HEK293 (cell line): ENCODE measurements at regions of chr20 and their contacts with region 1.

Region 1: DNA sequence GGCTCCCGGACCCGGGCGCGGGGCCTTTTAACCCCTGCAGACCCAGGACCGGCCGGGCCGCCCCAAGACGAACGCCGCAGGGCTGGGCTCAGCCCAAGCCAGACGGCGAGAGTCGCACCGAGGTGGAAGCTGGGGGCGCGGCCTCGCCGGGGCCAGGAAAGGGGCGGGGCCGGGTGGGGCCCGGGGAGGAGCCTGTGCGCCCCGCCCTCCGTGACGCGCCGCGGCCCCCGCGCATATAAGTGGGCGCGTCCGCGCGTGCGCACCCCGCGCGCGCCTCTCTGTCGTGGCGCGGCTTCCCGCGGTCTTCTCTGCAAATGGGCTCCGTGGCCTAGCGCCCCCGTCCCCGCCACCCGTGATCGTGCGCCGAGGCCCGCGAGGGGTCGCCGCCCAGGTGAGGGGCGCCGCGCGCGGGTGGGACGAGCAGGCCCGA is at the start of gene PPDPF:
- H3K4me3 ChIP-seq: peak within 1 kb of the TSS; percentile 71
- H3K27ac ChIP-seq: peak within 1 kb of the TSS; percentile 42; the same call in 1 of the 2 replicates
- H3K4me1 ChIP-seq: no peaks in the 10 kb centered on the region
- CTCF ChIP-seq: no peak

Region 2: DNA sequence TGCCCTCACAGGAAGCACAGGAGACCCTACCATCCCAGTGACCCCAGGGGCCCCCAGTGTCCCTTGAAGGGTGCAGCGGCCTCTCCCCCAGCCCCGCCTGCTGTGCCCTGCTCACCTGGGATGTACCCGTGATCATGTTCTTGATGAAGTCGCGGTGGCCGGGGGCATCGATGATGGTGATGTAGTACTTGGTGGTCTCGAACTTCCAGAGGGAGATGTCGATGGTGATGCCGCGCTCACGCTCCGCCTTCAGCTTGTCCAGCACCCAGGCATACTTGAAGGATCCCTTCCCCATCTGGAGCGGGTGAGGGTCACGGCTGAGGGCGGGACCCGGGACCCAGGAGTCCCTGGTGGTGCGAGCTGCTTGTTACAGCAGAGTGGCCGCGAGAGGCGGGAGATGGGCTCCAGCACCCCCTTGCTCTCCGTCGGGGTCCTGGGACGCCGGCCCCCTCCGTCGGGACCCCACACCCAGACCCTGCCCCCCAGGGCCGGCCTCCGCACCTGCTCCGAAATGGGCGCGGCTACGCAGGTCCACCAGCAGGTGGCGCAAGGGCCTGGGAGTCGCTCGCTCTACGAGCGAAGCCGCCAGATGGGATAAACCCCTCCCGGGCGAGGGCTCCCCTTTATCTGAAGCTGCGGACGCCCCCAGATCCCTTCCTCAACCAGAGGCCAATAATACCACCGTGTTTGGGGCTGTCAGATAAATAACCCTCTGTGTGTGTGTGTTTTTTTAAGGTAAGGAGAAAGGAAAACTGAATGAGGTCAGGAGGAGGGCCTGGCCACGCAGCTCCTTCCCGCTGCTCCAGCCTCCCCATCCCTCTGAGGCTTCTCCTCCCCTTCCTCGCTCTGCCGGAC is 24.6 kb before region 1 on chr20:
- CTCF ChIA-PET with region 1: interaction called, 12 read pairs
- POLR2A ChIA-PET with region 1: interaction called, 12 read pairs
- H3K4me3 ChIP-seq: no peak overlapping the region
- H3K27ac ChIP-seq: no peak overlapping the region
- H3K4me1 ChIP-seq: no peaks in the 10 kb centered on the region
- CTCF ChIP-seq: peak; percentile 84

Region 3: DNA sequence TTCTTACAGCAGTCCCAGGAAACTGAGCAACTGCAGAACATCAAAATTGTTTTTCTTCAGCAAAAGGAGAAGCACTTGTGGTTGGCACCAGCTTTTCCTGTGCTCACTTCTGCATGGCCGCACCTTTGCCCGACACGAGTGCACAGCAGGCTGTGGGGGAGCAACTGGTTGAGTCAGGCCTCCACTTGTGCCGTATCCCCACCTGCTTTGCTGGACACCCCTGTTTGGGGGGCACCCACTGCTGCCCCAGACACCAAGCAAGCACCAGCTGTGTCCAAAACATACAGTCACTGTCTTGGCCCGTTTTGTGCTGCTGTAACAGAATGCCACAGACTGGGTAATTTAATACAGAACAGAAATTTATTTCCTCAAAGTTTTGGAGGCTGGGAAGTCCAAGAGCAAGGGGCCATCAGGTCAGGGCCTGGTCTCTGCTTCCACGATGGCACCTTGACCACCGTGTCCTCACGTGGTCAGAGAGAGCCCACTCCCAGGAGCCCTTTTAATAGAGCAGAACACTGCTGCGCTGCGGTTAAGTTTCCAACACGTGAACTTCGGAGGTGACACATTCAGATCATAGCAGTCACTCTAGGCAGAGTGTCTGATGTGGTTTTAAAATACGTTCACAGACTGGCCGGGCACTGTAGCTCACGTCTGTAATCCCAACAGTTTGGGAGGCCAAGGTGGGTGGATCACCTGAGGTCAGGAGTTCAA is 115.1 kb after region 1 on chr20:
- CTCF ChIA-PET with region 1: no interaction called
- POLR2A ChIA-PET with region 1: no interaction called
- H3K4me3 ChIP-seq: no peak overlapping the region
- H3K27ac ChIP-seq: no peak overlapping the region
- H3K4me1 ChIP-seq: no peaks in the 10 kb centered on the region
- CTCF ChIP-seq: no peak